Colonic mucosa (tissue), 4 donors: ENCODE measurements at regions of chr1 and their contacts with region 1.

Region 1: GRCh38 chr1:98048244-98048643 is 127.4 kb upstream of the DPYD start:
- DNase-seq: peak; percentile 69
- H3K4me3 ChIP-seq: no peak overlapping the region
- H3K27ac ChIP-seq: no peak overlapping the region
- H3K4me1 ChIP-seq: no peaks in the 10 kb centered on the region
- H3K27me3 ChIP-seq: peaks cover 57% of the 10 kb centered on the region
- CTCF ChIP-seq: no peak

Region 2: GRCh38 chr1:97726383-97726782 is 321.9 kb before region 1 on chr1:
- intact Hi-C with region 1: no loop called
- DNase-seq: no peak
- H3K4me3 ChIP-seq: no peak overlapping the region
- H3K27ac ChIP-seq: no peak overlapping the region
- H3K4me1 ChIP-seq: no peaks in the 10 kb centered on the region
- H3K27me3 ChIP-seq: no peaks in the 10 kb centered on the region
- CTCF ChIP-seq: no peak

Region 3: GRCh38 chr1:97849345-97850340 is 198.6 kb before region 1 on chr1:
- intact Hi-C with region 1: loop called (anchors 10 kb)
- DNase-seq: no peak
- H3K4me3 ChIP-seq: no peak overlapping the region
- H3K27ac ChIP-seq: peak overlapping the region; percentile 4
- H3K4me1 ChIP-seq: no peaks in the 10 kb centered on the region
- H3K27me3 ChIP-seq: no peaks in the 10 kb centered on the region
- CTCF ChIP-seq: no peak

Region 4: GRCh38 chr1:98018074-98018473 is 30.2 kb before region 1 on chr1:
- intact Hi-C with region 1: no loop called
- DNase-seq: no peak
- H3K4me3 ChIP-seq: no peak overlapping the region
- H3K27ac ChIP-seq: no peak overlapping the region
- H3K4me1 ChIP-seq: no peaks in the 10 kb centered on the region
- H3K27me3 ChIP-seq: no peaks in the 10 kb centered on the region
- CTCF ChIP-seq: no peak

Region 5: GRCh38 chr1:98232678-98233077 is 184.4 kb after region 1 on chr1:
- intact Hi-C with region 1: no loop called
- DNase-seq: no peak
- H3K4me3 ChIP-seq: no peak overlapping the region
- H3K27ac ChIP-seq: no peak overlapping the region
- H3K4me1 ChIP-seq: no peaks in the 10 kb centered on the region
- H3K27me3 ChIP-seq: no peaks in the 10 kb centered on the region
- CTCF ChIP-seq: no peak